Spleen (tissue), 13 donors: ENCODE measurements at regions of chr1 and their contacts with region 1.

Region 1: GRCh38 chr1:211323156-211324063 is 3.2 kb upstream of the TRAF5 start:
- DNase-seq: no peak
- H3K4me3 ChIP-seq: no peak overlapping the region
- H3K27ac ChIP-seq: no peak overlapping the region
- H3K4me1 ChIP-seq: peaks cover 14 to 43% (median 26%) of the 10 kb centered on the region in 6 donors
- H3K27me3 ChIP-seq: no peaks in the 10 kb centered on the region
- CTCF ChIP-seq: peak; percentile 73 to 85 (median 79)
- POLR2A ChIP-seq: no peak

Region 2: DNA sequence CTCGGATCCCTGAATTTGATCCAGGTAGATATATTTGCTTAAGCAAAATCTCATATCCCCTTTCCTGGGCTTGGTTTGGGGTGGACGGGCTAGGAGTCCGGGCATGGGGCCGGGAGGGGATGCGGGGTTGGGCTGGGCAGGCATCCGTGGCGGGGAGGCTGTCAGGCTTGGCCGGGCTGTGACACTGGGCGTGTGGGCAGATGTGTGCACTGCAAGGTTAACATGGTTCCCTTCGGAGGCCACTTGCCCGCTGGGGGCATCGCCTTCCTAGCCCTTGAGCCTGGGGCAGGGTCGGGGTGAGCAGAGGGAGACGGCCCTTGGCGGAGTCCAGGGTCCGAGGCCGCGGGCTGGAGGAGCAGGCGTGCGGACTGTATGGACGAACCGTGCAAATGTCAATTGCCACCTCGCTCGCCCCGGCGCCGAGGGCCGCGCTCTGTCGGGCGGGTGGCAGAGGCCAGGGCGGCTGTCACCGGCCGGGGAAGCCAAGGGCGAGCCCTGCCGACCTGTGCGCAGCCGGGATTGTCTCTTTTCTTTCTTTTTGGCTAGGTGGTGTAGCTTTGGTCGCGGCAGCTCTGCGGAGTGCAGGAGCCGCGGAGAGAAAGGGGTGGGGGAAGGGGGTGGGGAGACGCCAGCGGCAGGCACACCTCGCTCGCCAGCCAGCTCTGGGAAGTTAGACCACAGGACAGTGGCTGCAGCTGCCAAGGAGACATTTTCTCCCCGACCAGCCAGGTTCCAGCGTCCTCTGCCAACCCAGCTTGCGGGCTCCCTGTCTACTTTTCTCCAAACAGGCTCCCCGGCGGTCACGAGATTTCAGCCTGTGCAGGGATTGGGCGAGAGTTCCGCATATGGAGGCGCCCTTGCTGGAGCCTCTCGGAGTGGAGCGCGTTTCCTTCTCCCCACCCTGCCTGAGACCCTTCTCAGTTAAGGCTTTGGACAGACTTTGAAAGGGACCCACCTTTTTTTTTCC is 63.0 kb before region 1 on chr1:
- intact Hi-C with region 1: loop called (anchors 10 kb)
- DNase-seq: peak; percentile 95
- H3K4me3 ChIP-seq: peak overlapping the region; percentile 78 to 97 (median 88)
- H3K27ac ChIP-seq: peak overlapping the region; percentile 94 to 99 (median 99)
- H3K4me1 ChIP-seq: peaks cover 0 to 51% (median 29%) of the 10 kb centered on the region in 6 donors
- H3K27me3 ChIP-seq: no peaks in the 10 kb centered on the region
- CTCF ChIP-seq: peak in 1 of 11 experiments; percentile 10
- POLR2A ChIP-seq: no peak

Region 3: GRCh38 chr1:211469938-211470529 is 146.6 kb after region 1 on chr1:
- intact Hi-C with region 1: loop called (anchors 5 kb)
- DNase-seq: peak; percentile 86
- H3K4me3 ChIP-seq: no peak overlapping the region
- H3K27ac ChIP-seq: peak overlapping the region in 3 of 8 donors; percentile 20 to 54 (median 46)
- H3K4me1 ChIP-seq: peaks cover 0 to 27% (median 9%) of the 10 kb centered on the region in 6 donors
- H3K27me3 ChIP-seq: peaks cover 0 to 12% (median 0%) of the 10 kb centered on the region in 7 donors
- CTCF ChIP-seq: peak; percentile 10 to 82 (median 69)
- POLR2A ChIP-seq: no peak

Region 4: GRCh38 chr1:211654838-211655787 is 331.7 kb after region 1 on chr1:
- intact Hi-C with region 1: loop called (anchors 5 kb)
- DNase-seq: peak; percentile 95
- H3K4me3 ChIP-seq: peak overlapping the region in 1 of 8 donors; percentile 13
- H3K27ac ChIP-seq: no peak overlapping the region
- H3K4me1 ChIP-seq: peaks cover 0 to 17% (median 10%) of the 10 kb centered on the region in 6 donors
- H3K27me3 ChIP-seq: peaks cover 0 to 6% (median 0%) of the 10 kb centered on the region in 7 donors
- CTCF ChIP-seq: peak; percentile 58 to 92 (median 87)
- POLR2A ChIP-seq: no peak